Left cardiac atrium (tissue), 4 donors: ENCODE measurements at regions of chr5 and their contacts with region 1.

Region 1: DNA sequence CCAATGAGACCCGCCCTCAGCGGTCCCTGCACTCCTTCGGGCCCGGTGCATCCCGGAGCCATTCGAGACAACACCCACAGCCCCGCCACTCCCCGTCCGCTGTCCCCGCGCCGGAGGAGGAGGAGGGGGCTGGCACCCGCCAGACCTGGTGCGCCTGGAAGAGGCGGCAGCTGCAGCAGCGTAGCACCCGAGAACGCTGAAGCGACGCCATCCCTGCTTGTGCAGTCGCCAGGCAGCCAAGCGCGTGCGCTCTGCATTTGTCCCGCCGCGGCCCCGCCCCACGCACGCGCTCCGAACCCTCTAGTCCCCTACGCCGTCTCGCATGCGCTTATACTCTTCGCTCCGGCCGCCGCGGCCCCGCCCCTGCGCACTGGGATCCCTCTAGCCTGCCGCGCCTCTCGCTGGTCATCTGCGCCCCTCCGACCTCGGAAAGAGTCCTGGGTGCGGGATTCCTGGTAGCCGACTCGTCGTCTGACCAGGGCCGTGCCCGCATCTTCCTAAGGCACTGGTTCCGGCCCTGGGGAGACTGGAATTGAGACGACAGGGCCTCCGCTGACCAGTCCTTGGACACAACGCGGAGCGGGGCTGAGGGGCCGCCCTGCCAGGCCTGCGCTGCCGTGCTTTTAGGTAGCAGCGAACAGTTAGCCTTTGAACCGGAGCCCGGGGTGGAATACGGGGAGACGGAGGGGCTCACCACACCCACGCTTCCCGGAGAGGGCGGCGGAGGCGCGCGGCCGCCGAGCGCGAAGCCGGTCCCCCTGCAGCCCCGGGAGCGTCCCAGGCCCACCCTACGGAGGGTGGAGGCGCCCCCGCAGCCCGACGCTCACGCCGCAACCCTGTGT is at the start of gene MRNIP:
- DNase-seq: peak; percentile 99
- ATAC-seq: peak; percentile 99
- total RNA-seq, gene MRNIP: 11.1 to 12.7 TPM

Region 2: GRCh38 chr5:179422213-179422855 is 436.5 kb before region 1 on chr5:
- intact Hi-C with region 1: no loop called
- DNase-seq: no peak
- ATAC-seq: no peak

Region 3: GRCh38 chr5:179821581-179822432 is 37.0 kb before region 1 on chr5:
- intact Hi-C with region 1: loop called in 1 of 2 experiments (anchors 5 kb)
- DNase-seq: peak; percentile 97
- ATAC-seq: peak; percentile 79 to 82

Region 4: DNA sequence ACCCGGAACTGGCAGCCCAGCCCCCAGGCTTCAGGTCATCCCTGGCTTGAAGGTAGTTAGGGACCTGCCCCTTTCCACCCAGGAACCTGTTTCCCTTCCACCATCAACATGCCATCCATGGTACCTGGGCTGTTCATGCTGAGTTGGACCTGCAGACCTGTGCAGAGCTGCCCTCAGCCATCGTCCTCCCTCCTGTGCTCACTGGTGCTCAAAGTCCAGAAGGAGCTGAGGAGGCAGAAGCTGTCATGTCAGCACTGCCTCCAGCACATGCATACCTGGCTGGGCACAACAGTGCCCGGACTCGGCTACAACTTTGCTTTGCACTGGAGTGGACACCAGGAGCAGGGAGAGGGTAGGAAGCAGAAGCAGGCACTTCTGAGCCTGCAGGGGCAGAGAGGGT is 1076.4 kb after region 1 on chr5:
- intact Hi-C with region 1: no loop called
- DNase-seq: no peak
- ATAC-seq: no peak